ENCODE measurements at regions of chr19 and their contacts with region 1.

Region 1: GRCh38 chr19:17938092-17938845 is 5.5 kb downstream of the CCDC124 start:
- DNase-seq: peak; percentile 81
- H3K4me3 ChIP-seq: no peak overlapping the region
- H3K27ac ChIP-seq: no peak overlapping the region
- H3K4me1 ChIP-seq: peaks cover 5 to 13% (median 11%) of the 10 kb centered on the region in 4 donors
- H3K27me3 ChIP-seq: no peaks in the 10 kb centered on the region
- CTCF ChIP-seq: peak; percentile 90 to 93 (median 91)
- EP300 ChIP-seq: no peak
- POLR2A ChIP-seq: no peak

Region 2: GRCh38 chr19:17865364-17866311 is 72.6 kb before region 1 on chr19:
- in situ Hi-C with region 1: loop called in 1 of 4 experiments (anchors 5 kb)
- intact Hi-C with region 1: no loop called
- DNase-seq: peak; percentile 81
- H3K4me3 ChIP-seq: no peak overlapping the region
- H3K27ac ChIP-seq: peak overlapping the region; percentile 59 to 74 (median 67)
- H3K4me1 ChIP-seq: peaks cover 8 to 52% (median 28%) of the 10 kb centered on the region in 4 donors
- H3K27me3 ChIP-seq: peaks cover 13% of the 10 kb centered on the region
- CTCF ChIP-seq: no peak
- EP300 ChIP-seq: no peak
- POLR2A ChIP-seq: peak; percentile 40

Region 3: DNA sequence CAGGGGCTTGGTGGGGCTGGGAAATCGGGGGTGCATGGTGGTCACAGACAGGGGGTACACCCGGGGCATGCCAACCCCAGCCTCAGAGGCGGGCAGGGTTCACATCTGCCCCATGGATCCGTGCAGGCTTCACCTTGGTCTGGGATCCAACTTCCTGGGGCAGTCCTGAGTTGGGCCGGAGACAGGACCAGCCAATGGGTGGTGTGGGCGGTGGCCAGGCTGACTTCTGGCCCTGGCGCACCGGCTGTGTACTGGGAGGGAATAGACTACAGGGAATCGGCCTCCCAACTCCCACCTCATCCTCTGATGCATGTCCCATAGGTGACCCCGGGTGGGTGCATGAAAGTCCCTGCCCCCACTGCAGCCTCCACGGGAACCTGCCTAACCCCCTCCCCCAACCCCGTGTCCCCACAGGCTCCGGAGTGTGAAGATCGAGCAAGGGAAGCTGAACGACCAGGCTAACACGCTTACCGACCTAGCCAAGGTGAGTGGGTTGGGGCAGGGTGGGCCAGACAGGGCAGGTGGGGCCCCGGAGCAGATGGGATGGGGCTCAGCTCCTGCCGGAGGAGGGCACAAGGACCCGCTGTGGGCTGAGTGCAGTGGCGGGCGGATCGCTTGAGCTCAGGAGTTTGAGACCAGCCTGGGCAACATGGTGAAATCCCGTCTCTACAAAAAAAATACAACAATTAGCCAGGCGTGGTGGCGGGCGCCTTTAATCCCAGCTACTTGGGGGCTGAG is 55.0 kb after region 1 on chr19:
- in situ Hi-C with region 1: loop called in 3 of 4 experiments (anchors 5 to 10 kb)
- intact Hi-C with region 1: loop called (anchors 2 kb)
- DNase-seq: no peak
- H3K4me3 ChIP-seq: no peak overlapping the region
- H3K27ac ChIP-seq: no peak overlapping the region
- H3K4me1 ChIP-seq: no peaks in the 10 kb centered on the region
- H3K27me3 ChIP-seq: peaks cover 13% of the 10 kb centered on the region
- CTCF ChIP-seq: no peak
- EP300 ChIP-seq: no peak
- POLR2A ChIP-seq: no peak

Region 4: DNA sequence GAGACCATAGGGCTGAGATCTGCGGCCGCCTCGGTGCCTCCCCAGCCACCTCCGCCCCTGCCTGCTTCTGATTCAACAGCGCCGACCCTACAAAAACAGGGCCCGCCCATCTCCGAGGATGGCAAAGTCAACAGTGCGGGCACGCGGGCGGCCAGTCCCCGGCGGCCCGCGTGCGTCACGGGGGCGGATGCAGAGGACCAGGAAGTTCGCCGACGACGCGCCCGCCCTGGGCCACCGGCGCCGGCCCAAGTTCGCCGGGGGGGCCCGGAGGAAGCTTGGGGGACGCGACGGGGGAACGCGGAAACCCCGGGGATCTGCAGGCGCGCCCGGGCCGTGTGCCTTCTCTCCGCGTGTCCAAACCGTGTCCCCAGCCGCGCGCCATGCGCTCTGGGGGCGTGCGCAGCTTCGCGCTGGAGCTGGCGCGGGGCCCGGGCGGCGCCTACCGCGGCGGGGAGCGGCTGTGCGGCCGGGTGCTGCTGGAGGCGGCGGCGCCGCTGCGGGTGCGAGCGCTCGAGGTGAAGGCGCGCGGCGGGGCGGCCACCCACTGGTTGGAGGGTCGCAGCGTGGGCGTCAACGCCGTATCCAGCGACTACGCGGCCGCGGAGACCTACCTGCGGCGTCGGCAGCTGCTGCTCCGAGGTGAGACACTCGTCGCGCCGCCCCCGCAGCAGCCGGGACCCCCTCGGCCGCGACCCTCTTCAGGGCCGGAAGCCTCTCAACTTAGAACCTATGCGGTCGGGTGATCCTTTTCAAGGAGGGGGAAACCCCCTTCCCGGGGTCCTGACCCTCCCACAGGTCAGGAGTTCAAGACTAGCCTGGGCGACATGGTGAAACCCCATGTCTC is 62.9 kb after region 1 on chr19:
- in situ Hi-C with region 1: loop called in 2 of 4 experiments (anchors 10 kb)
- intact Hi-C with region 1: loop called (anchors 2 kb)
- DNase-seq: peak; percentile 95
- H3K4me3 ChIP-seq: peak overlapping the region; percentile 69 to 86 (median 78)
- H3K27ac ChIP-seq: peak overlapping the region; percentile 89 to 92 (median 90)
- H3K4me1 ChIP-seq: peaks cover 4 to 28% (median 19%) of the 10 kb centered on the region in 4 donors
- H3K27me3 ChIP-seq: no peaks in the 10 kb centered on the region
- CTCF ChIP-seq: no peak
- EP300 ChIP-seq: no peak
- POLR2A ChIP-seq: peak; percentile 84

Measured in transverse colon (tissue), 4 donors.